ENCODE measurements at regions of chr7 and their contacts with region 1.

Region 1: DNA sequence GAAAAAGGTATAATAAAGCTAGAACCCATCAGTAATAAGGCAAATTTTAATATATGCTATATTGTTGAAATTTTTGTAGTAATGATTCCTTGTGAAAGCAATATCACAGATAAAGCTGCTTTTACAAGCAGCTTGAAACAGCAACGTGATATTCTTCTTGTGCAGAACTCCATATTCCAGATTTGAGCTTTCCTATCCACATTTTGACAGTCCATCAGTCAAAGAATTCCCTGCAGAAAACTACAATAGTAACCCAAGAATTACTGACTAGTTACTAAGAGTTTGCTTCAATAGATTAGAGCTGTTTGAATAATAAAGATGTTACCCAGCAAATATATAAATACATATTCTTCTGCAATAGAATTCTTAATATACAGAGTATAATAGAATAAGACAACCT is 291.2 kb downstream of the KCND2 start:
- DNase-seq: no peak
- H3K4me3 ChIP-seq: no peak overlapping the region
- H3K27ac ChIP-seq: no peak overlapping the region
- H3K4me1 ChIP-seq: no peaks in the 10 kb centered on the region
- H3K27me3 ChIP-seq: no peaks in the 10 kb centered on the region
- CTCF ChIP-seq: no peak
- POLR2A ChIP-seq: no peak

Region 2: GRCh38 chr7:120502132-120502531 is 62.0 kb before region 1 on chr7:
- intact Hi-C with region 1: loop called (anchors 10 kb)
- DNase-seq: no peak
- H3K4me3 ChIP-seq: no peak overlapping the region
- H3K27ac ChIP-seq: no peak overlapping the region
- H3K4me1 ChIP-seq: no peaks in the 10 kb centered on the region
- H3K27me3 ChIP-seq: no peaks in the 10 kb centered on the region
- CTCF ChIP-seq: no peak
- POLR2A ChIP-seq: no peak

Region 3: DNA sequence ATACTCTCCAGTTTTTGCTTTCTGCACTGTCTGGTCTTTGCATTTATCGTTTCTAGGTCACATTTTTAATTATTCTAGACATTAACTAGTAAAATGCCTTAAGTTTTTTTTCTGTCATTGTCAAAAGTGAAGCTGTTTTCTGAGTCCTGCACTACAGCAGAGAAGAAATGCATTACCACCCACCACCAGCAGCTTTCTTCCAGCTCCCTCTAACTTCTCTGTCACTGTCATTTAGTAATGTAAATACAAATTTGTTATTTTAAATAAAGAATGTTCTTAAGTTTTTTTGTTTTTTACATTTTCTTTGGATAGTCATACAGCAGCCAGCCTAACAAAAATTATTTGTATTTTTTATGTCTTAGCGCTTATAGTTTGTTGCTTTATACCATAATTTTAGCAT is 1327.6 kb after region 1 on chr7:
- intact Hi-C with region 1: no loop called
- DNase-seq: no peak
- H3K4me3 ChIP-seq: no peak overlapping the region
- H3K27ac ChIP-seq: no peak overlapping the region
- H3K4me1 ChIP-seq: no peaks in the 10 kb centered on the region
- H3K27me3 ChIP-seq: no peaks in the 10 kb centered on the region
- CTCF ChIP-seq: no peak
- POLR2A ChIP-seq: no peak